HCT116 (cell line): ENCODE measurements at regions of chrX and their contacts with region 1.

Region 1: DNA sequence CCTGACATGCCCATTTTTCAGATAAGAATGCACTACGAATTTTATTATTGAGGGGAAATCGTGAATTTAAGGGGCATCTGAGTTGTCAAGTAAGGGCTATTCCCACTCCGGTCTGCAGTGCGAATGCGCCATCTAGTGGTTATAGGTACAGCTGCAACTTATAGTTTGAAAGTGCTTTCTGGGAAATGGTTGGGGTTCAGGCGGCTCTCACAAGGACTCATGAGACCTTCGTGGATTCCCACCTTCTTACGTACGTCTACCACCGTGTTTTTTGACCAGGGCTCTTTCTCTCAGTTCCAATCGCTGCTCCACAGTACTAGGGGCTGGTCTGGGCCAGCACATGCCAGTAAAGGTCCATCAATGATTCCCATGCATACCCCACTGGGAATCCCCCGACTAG is 12.3 kb downstream of the MSL3 start:
- DNase-seq: peak; percentile 22
- ATAC-seq: peak; percentile 80
- H3K4me3 ChIP-seq: no peak overlapping the region
- H3K27ac ChIP-seq: no peak overlapping the region
- H3K4me1 ChIP-seq: no peaks in the 10 kb centered on the region
- H3K27me3 ChIP-seq: no peaks in the 10 kb centered on the region
- CTCF ChIP-seq: peak; percentile 66 to 80 (median 76)
- POLR2A ChIP-seq: no peak
- RAD21 ChIP-seq: peak; percentile 67

Region 2: GRCh38 chrX:11143931-11144678 is 626.2 kb before region 1 on chrX:
- CTCF ChIA-PET with region 1: no interaction called
- POLR2A ChIA-PET with region 1: no interaction called
- RAD21 ChIA-PET with region 1: no interaction called
- intact Hi-C with region 1: loop called (anchors 5 kb)
- DNase-seq: peak; percentile 63
- ATAC-seq: peak; percentile 86
- H3K4me3 ChIP-seq: no peak overlapping the region
- H3K27ac ChIP-seq: no peak overlapping the region
- H3K4me1 ChIP-seq: no peaks in the 10 kb centered on the region
- H3K27me3 ChIP-seq: no peaks in the 10 kb centered on the region
- CTCF ChIP-seq: peak; percentile 38 to 57 (median 52)
- POLR2A ChIP-seq: no peak
- RAD21 ChIP-seq: peak; percentile 66

Region 3: GRCh38 chrX:11381464-11381863 is 388.9 kb before region 1 on chrX:
- CTCF ChIA-PET with region 1: no interaction called
- POLR2A ChIA-PET with region 1: no interaction called
- RAD21 ChIA-PET with region 1: no interaction called
- intact Hi-C with region 1: loop called (anchors 5 kb)
- DNase-seq: peak; percentile 24
- ATAC-seq: peak; percentile 84
- H3K4me3 ChIP-seq: no peak overlapping the region
- H3K27ac ChIP-seq: no peak overlapping the region
- H3K4me1 ChIP-seq: no peaks in the 10 kb centered on the region
- H3K27me3 ChIP-seq: no peaks in the 10 kb centered on the region
- CTCF ChIP-seq: peak; percentile 13 to 50 (median 42); a peak in 4 of 6 replicates
- POLR2A ChIP-seq: no peak
- RAD21 ChIP-seq: peak; percentile 28; the same call in 1 of the 2 replicates

Region 4: GRCh38 chrX:11890836-11891514 is 120.7 kb after region 1 on chrX:
- CTCF ChIA-PET with region 1: no interaction called
- POLR2A ChIA-PET with region 1: no interaction called
- RAD21 ChIA-PET with region 1: no interaction called
- intact Hi-C with region 1: no loop called
- DNase-seq: no peak
- ATAC-seq: no peak
- H3K4me3 ChIP-seq: no peak overlapping the region
- H3K27ac ChIP-seq: no peak overlapping the region
- H3K4me1 ChIP-seq: no peaks in the 10 kb centered on the region
- H3K27me3 ChIP-seq: no peaks in the 10 kb centered on the region
- CTCF ChIP-seq: no peak
- POLR2A ChIP-seq: no peak
- RAD21 ChIP-seq: no peak